A549 (cell line): ENCODE measurements at regions of chr10 and their contacts with region 1.

Region 1: GRCh38 chr10:86399879-86400704 is 33.5 kb upstream of the GRID1 start:
- DNase-seq: peak; percentile 95 to 97
- ATAC-seq: peak; percentile 88 to 93
- H3K4me3 ChIP-seq: peak overlapping the region; percentile 78
- H3K27ac ChIP-seq: peak overlapping the region; percentile 92 to 94
- H3K4me1 ChIP-seq: peaks cover 23% of the 10 kb centered on the region
- CTCF ChIP-seq: peak; percentile 94
- EP300 ChIP-seq: no peak
- POLR2A ChIP-seq: peak; percentile 60
- RAD21 ChIP-seq: peak; percentile 89 to 97

Region 2: DNA sequence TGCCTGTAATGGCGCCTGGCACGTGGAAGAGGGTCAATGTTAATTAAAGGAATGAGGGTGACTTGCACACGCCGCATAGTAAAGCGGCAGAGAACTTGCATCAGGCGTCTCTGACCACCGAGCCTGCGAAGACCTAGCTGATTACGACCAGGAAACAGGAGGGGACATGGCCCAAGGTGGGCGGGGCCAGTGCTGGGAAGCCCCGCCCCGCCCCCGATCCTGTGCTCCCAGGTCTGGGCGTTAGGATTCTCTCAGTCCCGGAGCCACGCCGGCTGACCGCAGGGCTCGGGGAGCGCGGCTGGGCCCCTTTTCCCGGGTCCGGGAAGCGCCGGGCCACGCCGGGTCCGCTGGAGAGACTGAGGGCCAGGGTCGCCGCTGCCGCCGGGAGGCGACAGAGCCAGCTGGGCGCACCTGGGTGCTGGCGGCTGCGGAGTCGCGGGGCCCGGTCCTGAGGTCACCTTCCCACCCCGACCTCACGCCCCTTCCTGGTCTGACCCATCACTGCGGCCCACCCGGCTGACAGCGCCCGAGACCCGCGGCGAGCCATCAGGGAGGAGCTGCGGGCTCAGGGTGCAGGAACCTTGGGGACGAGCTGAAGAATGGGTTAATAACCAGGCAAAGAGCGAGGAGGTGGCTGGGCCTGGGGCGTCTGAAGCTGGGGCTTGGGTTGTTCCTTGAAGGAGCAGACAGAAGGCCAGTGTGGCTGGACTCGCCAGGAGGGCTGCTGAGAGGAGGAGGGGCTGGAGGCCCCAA is 10.5 kb before region 1 on chr10:
- CTCF ChIA-PET with region 1: interaction called, 31 read pairs
- POLR2A ChIA-PET with region 1: interaction called, 3 read pairs
- DNase-seq: peak; percentile 42 to 43
- ATAC-seq: peak; percentile 60 to 89; a peak in 5 of 6 replicates
- H3K4me3 ChIP-seq: peak overlapping the region; percentile 39
- H3K27ac ChIP-seq: peak overlapping the region; percentile 31 to 74; a peak in 4 of 6 replicates
- H3K4me1 ChIP-seq: no peaks in the 10 kb centered on the region
- CTCF ChIP-seq: no peak
- EP300 ChIP-seq: no peak
- POLR2A ChIP-seq: no peak
- RAD21 ChIP-seq: no peak

Region 3: DNA sequence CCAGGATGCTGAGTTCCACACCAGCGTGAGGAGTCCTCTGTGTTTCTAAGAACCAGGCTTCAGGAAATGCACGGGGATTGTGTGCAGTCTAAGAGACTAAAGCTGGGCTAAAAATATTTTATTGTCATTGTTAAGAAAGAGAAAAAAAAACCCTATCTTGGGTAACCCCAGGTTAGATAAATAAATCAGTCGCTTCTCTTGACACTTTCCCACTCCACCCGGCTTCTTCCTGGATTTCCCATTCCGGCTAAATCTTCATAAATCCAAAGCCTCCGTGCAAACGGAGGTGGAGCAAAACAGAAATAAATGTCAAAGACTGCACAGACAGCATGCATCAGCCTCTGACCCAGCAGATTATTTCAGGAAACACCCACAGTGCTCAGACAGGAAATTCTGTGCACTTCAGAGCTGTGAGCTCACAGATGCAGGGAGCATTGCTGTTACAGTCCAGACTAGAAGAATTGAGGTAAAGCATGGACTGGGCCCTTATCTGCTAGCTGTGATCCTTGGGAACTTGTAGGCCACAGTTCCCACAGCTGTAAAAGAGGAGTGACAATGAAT is 11.3 kb after region 1 on chr10:
- CTCF ChIA-PET with region 1: interaction called, 18 read pairs
- POLR2A ChIA-PET with region 1: interaction called, 18 read pairs
- DNase-seq: peak in 1 of 2 experiments; percentile 48
- ATAC-seq: peak; percentile 47 to 66; a peak in 3 of 6 replicates
- H3K4me3 ChIP-seq: no peak overlapping the region
- H3K27ac ChIP-seq: peak overlapping the region in 1 of 2 experiments; percentile 13; a peak in 1 of 6 replicates
- H3K4me1 ChIP-seq: peaks cover 6% of the 10 kb centered on the region; the same call in 1 of the 3 replicates
- CTCF ChIP-seq: no peak
- EP300 ChIP-seq: no peak
- POLR2A ChIP-seq: no peak
- RAD21 ChIP-seq: no peak

Region 4: GRCh38 chr10:86439544-86439943 is 39.5 kb after region 1 on chr10:
- CTCF ChIA-PET with region 1: interaction called, 13 read pairs
- POLR2A ChIA-PET with region 1: interaction called, 49 read pairs
- DNase-seq: peak; percentile 23 to 88
- ATAC-seq: peak; percentile 56 to 68
- H3K4me3 ChIP-seq: no peak overlapping the region
- H3K27ac ChIP-seq: peak overlapping the region; percentile 87 to 88
- H3K4me1 ChIP-seq: peaks cover 87% of the 10 kb centered on the region
- CTCF ChIP-seq: no peak
- EP300 ChIP-seq: no peak
- POLR2A ChIP-seq: no peak
- RAD21 ChIP-seq: no peak

Region 5: GRCh38 chr10:86521678-86522509 is 121.8 kb after region 1 on chr10 and contains the start of gene WAPL:
- CTCF ChIA-PET with region 1: interaction called, 13 read pairs
- POLR2A ChIA-PET with region 1: interaction called, 13 read pairs
- DNase-seq: peak; percentile 95
- ATAC-seq: peak; percentile 93 to 97
- H3K4me3 ChIP-seq: peak within 1 kb of the TSS; percentile 95
- H3K27ac ChIP-seq: peak within 1 kb of the TSS; percentile 94 to 98
- H3K4me1 ChIP-seq: peaks cover 40% of the 10 kb centered on the region
- CTCF ChIP-seq: no peak
- EP300 ChIP-seq: no peak
- POLR2A ChIP-seq: peak; percentile 55
- RAD21 ChIP-seq: no peak; a peak in 1 of 5 replicates
- polyA plus RNA-seq, gene WAPL: 20.1 and 25.6 TPM in 2 replicates

Region 6: GRCh38 chr10:86535057-86535882 is 135.2 kb after region 1 on chr10:
- CTCF ChIA-PET with region 1: interaction called, 5 read pairs
- POLR2A ChIA-PET with region 1: interaction called, 20 read pairs
- DNase-seq: peak; percentile 77 to 95
- ATAC-seq: peak; percentile 99
- H3K4me3 ChIP-seq: peak overlapping the region; percentile 48
- H3K27ac ChIP-seq: peak overlapping the region; percentile 81 to 91
- H3K4me1 ChIP-seq: peaks cover 9% of the 10 kb centered on the region
- CTCF ChIP-seq: no peak
- EP300 ChIP-seq: no peak
- POLR2A ChIP-seq: peak; percentile 66
- RAD21 ChIP-seq: 0 out of 5 replicates have a peak, but pooled peaks of 1 of the 2 experiments have one; percentile 24